ENCODE measurements at regions of chr17 and their contacts with region 1.

Region 1: DNA sequence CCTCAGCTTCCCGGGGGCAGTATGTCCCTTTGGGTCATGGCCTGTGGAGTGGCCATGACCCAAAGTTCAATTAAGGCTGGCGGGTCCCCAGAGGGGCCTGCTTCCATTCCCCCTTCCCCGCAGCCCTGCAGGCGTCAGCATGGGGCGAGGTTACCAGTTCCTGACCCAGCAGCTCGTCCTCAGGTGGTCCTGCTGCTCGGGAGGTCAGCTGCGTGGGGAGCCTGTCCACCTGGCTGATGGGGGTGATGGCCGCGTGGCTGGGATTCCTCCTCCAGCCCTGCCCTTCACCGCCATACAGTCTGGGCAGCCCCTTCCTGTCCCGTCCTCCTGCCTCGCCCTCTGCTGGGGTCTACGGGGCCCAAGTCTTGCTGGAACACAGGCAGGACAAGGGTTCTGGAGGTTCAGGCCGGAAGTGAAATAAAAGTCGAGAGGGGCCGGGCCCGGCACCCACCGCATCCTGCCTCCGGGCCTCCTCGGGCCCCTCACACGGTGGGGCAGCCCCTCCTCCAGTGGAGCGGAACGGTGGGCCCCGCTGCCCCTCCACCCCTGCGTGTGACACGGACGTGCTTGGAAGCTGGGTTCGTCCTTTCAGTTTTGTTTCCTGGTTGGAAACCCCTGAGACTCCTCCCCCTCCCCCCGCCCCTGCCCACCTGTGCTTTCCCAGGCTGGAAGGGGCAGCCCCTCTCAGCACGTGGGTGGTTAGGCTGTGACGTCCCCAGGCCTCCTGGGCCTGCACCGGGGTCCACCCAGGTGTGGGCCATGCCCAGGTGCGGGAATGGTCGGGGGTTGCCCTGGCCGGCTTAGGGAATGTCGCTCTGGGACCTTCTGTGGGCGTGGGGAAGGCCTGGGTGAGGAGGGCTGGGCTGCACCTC is 6.8 kb downstream of the UBALD2 start:
- DNase-seq: peak in 8 of 9 experiments; percentile 32 to 91 (median 72)
- ATAC-seq: peak; percentile 39
- H3K4me3 ChIP-seq: peak overlapping the region; percentile 57 to 82
- H3K4me3 Mint-ChIP-seq: peak overlapping the region; percentile 79
- H3K27ac ChIP-seq: peak overlapping the region; percentile 75 to 96
- H3K27ac Mint-ChIP-seq: peak overlapping the region; percentile 94
- H3K4me1 ChIP-seq: peaks cover 84% of the 10 kb centered on the region
- H3K4me1 Mint-ChIP-seq: peaks cover 64% of the 10 kb centered on the region
- H3K27me3 ChIP-seq: no peaks in the 10 kb centered on the region
- H3K27me3 Mint-ChIP-seq: no peaks in the 10 kb centered on the region
- CTCF ChIP-seq: no peak

Region 2: GRCh38 chr17:76141212-76142038 is 130.5 kb before region 1 on chr17 and contains the start of gene FOXJ1:
- CTCF ChIA-PET with region 1: interaction called, 13 read pairs
- POLR2A ChIA-PET with region 1: interaction called, 8 read pairs
- intact Hi-C with region 1: no loop called
- DNase-seq: peak; percentile 86 to 96 (median 91)
- ATAC-seq: peak; percentile 55
- H3K4me3 ChIP-seq: peak within 1 kb of the TSS; percentile 54 to 67
- H3K4me3 Mint-ChIP-seq: peak within 1 kb of the TSS; percentile 88
- H3K27ac ChIP-seq: peak within 1 kb of the TSS; percentile 45 to 59
- H3K27ac Mint-ChIP-seq: peak within 1 kb of the TSS; percentile 88
- H3K4me1 ChIP-seq: peaks cover 74% of the 10 kb centered on the region
- H3K4me1 Mint-ChIP-seq: peaks cover 65% of the 10 kb centered on the region
- H3K27me3 ChIP-seq: peaks cover 0 to 8% of the 10 kb centered on the region in 2 experiments
- H3K27me3 Mint-ChIP-seq: no peaks in the 10 kb centered on the region
- CTCF ChIP-seq: no peak
- total RNA-seq, gene FOXJ1: 2.2 to 2.7 TPM

Region 3: GRCh38 chr17:76199469-76199868 is 72.4 kb before region 1 on chr17:
- CTCF ChIA-PET with region 1: no interaction called
- POLR2A ChIA-PET with region 1: interaction called, 4 read pairs
- intact Hi-C with region 1: loop called in 1 of 2 experiments (anchors 2 kb)
- DNase-seq: peak in 8 of 9 experiments; percentile 34 to 90 (median 65)
- ATAC-seq: peak; percentile 98
- H3K4me3 ChIP-seq: no peak overlapping the region
- H3K4me3 Mint-ChIP-seq: peak overlapping the region; percentile 6
- H3K27ac ChIP-seq: peak overlapping the region; percentile 29 to 46
- H3K27ac Mint-ChIP-seq: peak overlapping the region; percentile 93
- H3K4me1 ChIP-seq: peaks cover 75% of the 10 kb centered on the region
- H3K4me1 Mint-ChIP-seq: peaks cover 76% of the 10 kb centered on the region
- H3K27me3 ChIP-seq: no peaks in the 10 kb centered on the region
- H3K27me3 Mint-ChIP-seq: no peaks in the 10 kb centered on the region
- CTCF ChIP-seq: no peak

Region 4: GRCh38 chr17:76246080-76247066 is 25.5 kb before region 1 on chr17:
- CTCF ChIA-PET with region 1: interaction called, 6 read pairs
- POLR2A ChIA-PET with region 1: interaction called, 121 read pairs
- intact Hi-C with region 1: no loop called
- DNase-seq: peak in 6 of 9 experiments; percentile 34 to 71 (median 47)
- ATAC-seq: peak; percentile 86
- H3K4me3 ChIP-seq: no peak overlapping the region
- H3K4me3 Mint-ChIP-seq: peak overlapping the region; percentile 48
- H3K27ac ChIP-seq: peak overlapping the region; percentile 5 to 27
- H3K27ac Mint-ChIP-seq: peak overlapping the region; percentile 90
- H3K4me1 ChIP-seq: peaks cover 56% of the 10 kb centered on the region
- H3K4me1 Mint-ChIP-seq: peaks cover 59% of the 10 kb centered on the region
- H3K27me3 ChIP-seq: no peaks in the 10 kb centered on the region
- H3K27me3 Mint-ChIP-seq: no peaks in the 10 kb centered on the region
- CTCF ChIP-seq: no peak

Region 5: DNA sequence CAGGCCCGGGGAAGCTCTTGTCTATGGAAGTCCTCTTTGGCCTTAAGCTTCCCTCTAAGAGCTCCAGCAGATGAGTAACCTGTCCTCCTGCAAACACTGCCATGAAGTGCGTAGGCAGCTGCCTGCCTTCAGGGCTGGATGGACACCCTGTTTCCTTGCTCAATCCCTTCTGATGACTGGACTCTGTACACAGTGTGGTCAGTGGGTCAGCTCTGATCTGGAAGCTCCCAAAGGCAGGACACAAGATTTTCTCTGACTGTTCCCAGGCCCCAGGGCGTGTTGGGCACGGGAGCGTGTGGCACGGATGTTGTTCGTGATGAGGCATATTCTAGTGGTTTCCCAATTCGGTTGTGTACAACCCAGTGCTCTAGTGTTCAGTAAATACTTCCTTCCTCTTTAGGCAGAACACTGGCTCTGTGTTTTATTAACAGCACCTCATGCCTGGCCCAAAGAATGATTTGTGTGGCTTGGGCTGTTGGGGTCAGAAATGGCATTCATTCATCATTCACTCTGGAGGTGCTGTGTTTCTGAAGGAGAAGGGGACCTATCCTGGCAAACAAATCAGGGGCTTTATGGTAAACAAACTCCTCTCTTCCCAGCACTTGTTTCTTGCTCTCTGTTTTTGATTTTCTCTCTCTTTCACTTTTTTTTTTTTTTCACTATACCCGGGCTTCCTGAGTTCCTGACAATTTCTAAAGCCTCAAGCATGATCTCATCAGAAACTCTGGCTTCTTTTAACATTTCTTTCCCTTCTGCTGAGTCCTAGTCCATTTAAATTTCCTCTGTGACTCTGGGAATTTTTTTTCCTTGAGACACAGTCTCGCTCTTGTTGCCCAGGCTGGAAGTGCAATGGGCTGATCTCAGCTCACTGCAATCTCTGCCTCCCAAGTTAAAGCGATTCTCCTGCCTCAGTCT is 19.6 kb before region 1 on chr17:
- CTCF ChIA-PET with region 1: interaction called, 5 read pairs
- POLR2A ChIA-PET with region 1: interaction called, 121 read pairs
- intact Hi-C with region 1: no loop called
- DNase-seq: peak in 3 of 9 experiments; percentile 48 to 74 (median 70)
- ATAC-seq: peak; percentile 47
- H3K4me3 ChIP-seq: peak overlapping the region in 1 of 2 experiments; percentile 12
- H3K4me3 Mint-ChIP-seq: peak overlapping the region; percentile 61
- H3K27ac ChIP-seq: peak overlapping the region; percentile 7 to 74
- H3K27ac Mint-ChIP-seq: peak overlapping the region; percentile 96
- H3K4me1 ChIP-seq: peaks cover 44% of the 10 kb centered on the region
- H3K4me1 Mint-ChIP-seq: peaks cover 60% of the 10 kb centered on the region
- H3K27me3 ChIP-seq: no peaks in the 10 kb centered on the region
- H3K27me3 Mint-ChIP-seq: no peaks in the 10 kb centered on the region
- CTCF ChIP-seq: no peak

Region 6: GRCh38 chr17:76296186-76296585 is 24.3 kb after region 1 on chr17:
- CTCF ChIA-PET with region 1: interaction called, 10 read pairs
- POLR2A ChIA-PET with region 1: no interaction called
- intact Hi-C with region 1: no loop called
- DNase-seq: no peak
- ATAC-seq: no peak
- H3K4me3 ChIP-seq: no peak overlapping the region
- H3K4me3 Mint-ChIP-seq: no peak overlapping the region
- H3K27ac ChIP-seq: no peak overlapping the region
- H3K27ac Mint-ChIP-seq: no peak overlapping the region
- H3K4me1 ChIP-seq: no peaks in the 10 kb centered on the region
- H3K4me1 Mint-ChIP-seq: peaks cover 1% of the 10 kb centered on the region
- H3K27me3 ChIP-seq: no peaks in the 10 kb centered on the region
- H3K27me3 Mint-ChIP-seq: no peaks in the 10 kb centered on the region
- CTCF ChIP-seq: no peak

Measured in CD8-positive, alpha-beta T cell (primary cell).